SK-N-SH (cell line): ENCODE measurements at regions of chr19 and their contacts with region 1.

Region 1: DNA sequence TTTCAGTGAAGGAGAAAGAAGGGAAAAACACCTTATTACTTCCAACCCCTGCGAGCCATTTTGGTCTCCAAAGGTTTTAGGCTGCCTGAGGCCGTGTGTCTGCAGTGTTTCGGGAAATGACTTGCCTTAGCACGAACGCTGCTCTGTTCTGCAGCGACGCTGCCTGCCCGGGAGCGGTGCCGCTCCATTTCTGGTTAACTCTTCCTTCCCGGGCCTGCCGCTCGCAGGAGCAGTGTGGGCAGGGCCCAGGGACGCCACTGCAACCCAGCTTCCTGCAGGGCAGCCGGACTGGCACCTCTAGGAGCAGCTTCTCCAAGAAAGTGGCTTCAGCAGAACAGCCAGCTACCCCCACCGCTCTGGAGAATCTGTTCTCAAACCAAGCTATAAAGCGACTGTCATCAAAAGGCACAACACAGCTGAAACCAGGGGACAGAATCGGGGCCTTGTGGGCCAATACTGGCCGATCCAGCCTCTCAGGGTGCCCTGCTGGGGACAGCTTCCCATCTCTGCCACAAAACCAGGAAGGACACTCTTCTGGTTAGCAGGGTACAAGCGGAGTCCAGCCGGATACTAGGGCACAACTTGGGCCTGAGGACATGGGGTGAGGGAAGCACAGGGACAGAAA is 72.2 kb downstream of the KCTD15 start:
- DNase-seq: peak; percentile 73
- H3K4me3 ChIP-seq: no peak overlapping the region
- H3K27ac ChIP-seq: peak overlapping the region in 1 of 2 experiments; percentile 98; a peak in 2 of 4 replicates
- H3K4me1 ChIP-seq: peaks cover 0 to 30% of the 10 kb centered on the region in 2 experiments; a peak in 2 of 4 replicates
- H3K27me3 ChIP-seq: no peaks in the 10 kb centered on the region
- CTCF ChIP-seq: no peak
- EP300 ChIP-seq: peak in 1 of 2 experiments; percentile 57; a peak in 2 of 4 replicates
- RAD21 ChIP-seq: peak; percentile 45; the same call in 1 of the 2 replicates

Region 2: DNA sequence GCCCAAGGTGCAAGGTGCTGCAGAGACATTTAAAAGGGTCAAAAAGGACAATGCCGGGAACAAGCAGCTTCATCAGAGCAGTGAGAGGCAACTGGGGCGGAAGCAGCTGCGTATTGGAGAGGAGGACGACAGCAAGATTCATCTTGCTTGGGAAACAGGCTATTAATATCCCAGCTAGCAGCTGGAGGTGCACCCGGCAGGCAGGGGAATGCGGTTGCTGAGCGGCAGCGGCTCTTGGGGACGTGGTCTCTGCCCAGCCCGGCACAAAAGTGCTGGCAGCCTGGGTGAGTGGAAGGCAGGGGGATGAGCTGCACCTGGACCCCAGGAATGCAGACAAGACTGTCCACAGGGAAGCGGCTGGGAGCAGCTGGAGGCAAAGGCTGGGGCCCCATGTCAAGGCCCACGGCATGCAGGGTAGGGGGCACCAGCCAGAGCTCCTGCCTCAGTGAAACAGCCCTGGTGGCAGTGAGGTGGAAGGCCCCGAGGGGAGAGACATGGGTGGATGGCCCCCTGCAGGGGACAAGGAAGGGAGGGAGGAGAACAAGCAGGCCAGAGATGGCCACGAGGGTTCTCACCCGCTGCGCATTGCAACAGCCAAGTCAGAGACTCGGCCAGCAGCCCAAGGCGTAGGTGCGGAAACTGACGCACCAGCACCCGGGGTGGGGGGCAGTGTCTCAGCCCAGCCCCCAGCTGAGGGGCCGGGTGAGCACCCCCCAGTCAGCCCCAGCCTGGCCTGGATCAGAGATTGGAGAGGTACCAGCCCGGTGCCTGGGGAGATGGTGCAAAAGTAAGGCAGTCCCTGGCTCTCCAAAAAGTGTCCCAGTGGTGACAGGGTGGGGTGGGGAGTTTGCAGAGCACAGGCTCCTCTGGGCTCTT is 381.7 kb before region 1 on chr19:
- CTCF ChIA-PET with region 1: no interaction called
- POLR2A ChIA-PET with region 1: no interaction called
- DNase-seq: peak; percentile 16
- H3K4me3 ChIP-seq: no peak overlapping the region
- H3K27ac ChIP-seq: no peak overlapping the region
- H3K4me1 ChIP-seq: no peaks in the 10 kb centered on the region; a peak in 1 of 4 replicates
- H3K27me3 ChIP-seq: no peaks in the 10 kb centered on the region
- CTCF ChIP-seq: no peak
- EP300 ChIP-seq: no peak
- RAD21 ChIP-seq: no peak

Region 3: GRCh38 chr19:33815380-33816340 is 53.2 kb before region 1 on chr19:
- CTCF ChIA-PET with region 1: interaction called, 10 read pairs
- POLR2A ChIA-PET with region 1: interaction called, 14 read pairs
- DNase-seq: peak; percentile 55
- H3K4me3 ChIP-seq: no peak overlapping the region
- H3K27ac ChIP-seq: peak overlapping the region in 1 of 2 experiments; percentile 92; a peak in 2 of 4 replicates
- H3K4me1 ChIP-seq: peaks cover 0 to 42% of the 10 kb centered on the region in 2 experiments; a peak in 2 of 4 replicates
- H3K27me3 ChIP-seq: no peaks in the 10 kb centered on the region
- CTCF ChIP-seq: no peak
- EP300 ChIP-seq: peak in 1 of 2 experiments; percentile 34; a peak in 1 of 4 replicates
- RAD21 ChIP-seq: no peak

Region 4: DNA sequence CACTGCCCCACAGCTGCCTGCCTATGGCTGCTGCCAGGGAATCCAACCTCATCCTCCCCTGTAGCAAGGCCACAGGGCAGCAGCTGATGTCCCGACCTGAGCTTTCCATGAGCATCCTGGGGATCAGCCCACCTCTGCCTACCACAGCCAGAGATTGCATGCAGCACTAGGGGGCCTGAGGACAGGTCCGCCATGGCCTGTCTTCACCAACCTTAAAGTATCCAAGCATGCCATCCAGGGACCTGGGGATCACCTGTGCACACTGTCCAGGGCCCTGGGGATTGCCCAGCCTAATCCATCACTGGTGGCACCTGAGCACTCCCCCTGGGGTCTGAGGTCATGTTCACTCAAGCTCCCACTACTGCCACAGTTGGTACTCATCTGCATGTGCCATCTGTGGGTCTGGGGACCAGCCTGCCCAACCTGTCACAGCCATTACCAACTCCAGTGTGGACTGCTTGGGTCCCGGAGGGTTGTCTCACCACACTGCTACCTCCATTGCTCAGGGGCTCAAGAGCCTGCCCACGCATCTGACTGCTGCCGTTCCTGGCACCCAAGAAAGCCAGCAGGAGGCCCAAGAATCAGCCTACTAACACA is 19.3 kb before region 1 on chr19:
- CTCF ChIA-PET with region 1: no interaction called
- POLR2A ChIA-PET with region 1: no interaction called
- DNase-seq: no peak
- H3K4me3 ChIP-seq: no peak overlapping the region
- H3K27ac ChIP-seq: no peak overlapping the region
- H3K4me1 ChIP-seq: no peaks in the 10 kb centered on the region
- H3K27me3 ChIP-seq: no peaks in the 10 kb centered on the region
- CTCF ChIP-seq: no peak
- EP300 ChIP-seq: no peak
- RAD21 ChIP-seq: no peak

Region 5: DNA sequence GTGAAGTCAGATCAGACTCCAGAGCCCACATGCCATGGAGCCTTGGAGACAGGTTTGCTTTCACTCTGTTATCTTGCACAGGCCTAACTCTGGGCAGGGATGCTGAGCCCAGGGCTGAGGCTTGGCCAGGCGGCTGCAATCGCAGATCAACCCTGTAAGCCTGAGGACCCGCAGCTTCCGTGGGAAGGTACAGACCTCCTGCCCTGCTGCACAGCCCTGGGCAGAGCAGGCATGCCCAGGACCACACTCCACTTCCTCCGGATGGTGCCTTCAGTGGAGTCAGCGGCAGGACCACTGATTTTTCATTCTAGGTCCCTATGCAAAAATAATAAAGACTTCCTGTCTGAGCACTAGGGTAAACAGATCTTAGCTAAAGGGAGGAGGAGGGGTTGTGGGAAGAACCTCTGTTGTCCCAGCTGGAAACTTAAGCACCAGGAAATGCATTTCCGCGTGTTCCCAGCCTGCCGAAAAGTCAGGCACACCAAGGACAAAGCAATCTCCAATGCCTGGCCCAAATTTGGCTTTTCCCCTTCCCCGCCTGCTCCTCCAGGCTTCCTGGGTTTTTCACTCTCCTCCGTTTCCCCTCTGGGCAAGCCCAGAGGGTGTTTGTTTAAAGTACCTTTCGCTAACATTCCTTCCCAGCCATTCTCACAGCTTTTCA is 15.1 kb after region 1 on chr19:
- CTCF ChIA-PET with region 1: interaction called, 4 read pairs
- POLR2A ChIA-PET with region 1: interaction called, 40 read pairs
- DNase-seq: peak; percentile 80
- H3K4me3 ChIP-seq: no peak overlapping the region
- H3K27ac ChIP-seq: peak overlapping the region in 1 of 2 experiments; percentile 85; a peak in 2 of 4 replicates
- H3K4me1 ChIP-seq: peaks cover 0 to 29% of the 10 kb centered on the region in 2 experiments; a peak in 1 of 4 replicates
- H3K27me3 ChIP-seq: no peaks in the 10 kb centered on the region
- CTCF ChIP-seq: no peak
- EP300 ChIP-seq: peak in 1 of 2 experiments; percentile 51; a peak in 1 of 4 replicates
- RAD21 ChIP-seq: no peak